Gastrocnemius medialis (tissue), 4 donors: ENCODE measurements at regions of chr12 and their contacts with region 1.

Region 1: DNA sequence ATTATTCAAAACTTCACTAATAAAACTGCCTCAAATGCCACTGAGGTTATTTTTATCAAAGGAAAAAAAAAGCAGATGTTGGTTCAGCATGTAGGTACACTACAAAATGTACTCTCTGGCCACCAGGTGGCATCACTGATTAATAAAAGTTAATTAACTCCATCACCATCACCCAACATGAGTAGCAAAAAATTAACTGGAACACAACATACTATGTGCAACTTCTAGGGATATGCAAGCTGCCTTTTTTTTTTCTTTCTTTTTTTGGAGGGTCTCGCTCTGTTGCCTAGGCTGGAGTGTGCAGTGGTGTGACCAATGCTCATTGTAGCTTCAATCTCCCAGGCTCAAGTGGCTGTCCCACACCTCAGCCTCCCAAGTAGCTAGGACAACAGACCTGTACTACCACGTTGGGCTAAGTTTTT is 43.8 kb upstream of the NR2C1 start:
- DNase-seq: peak; percentile 32 to 53
- ATAC-seq: peak; percentile 87 to 92
- H3K4me3 ChIP-seq: no peak overlapping the region
- H3K27ac ChIP-seq: peak overlapping the region in 2 of 4 donors; percentile 22 to 59
- H3K4me1 ChIP-seq: peaks cover 16 to 23% of the 10 kb centered on the region in 2 donors
- H3K27me3 ChIP-seq: no peaks in the 10 kb centered on the region
- CTCF ChIP-seq: peak; percentile 52 to 80 (median 72)
- POLR2A ChIP-seq: no peak

Region 2: DNA sequence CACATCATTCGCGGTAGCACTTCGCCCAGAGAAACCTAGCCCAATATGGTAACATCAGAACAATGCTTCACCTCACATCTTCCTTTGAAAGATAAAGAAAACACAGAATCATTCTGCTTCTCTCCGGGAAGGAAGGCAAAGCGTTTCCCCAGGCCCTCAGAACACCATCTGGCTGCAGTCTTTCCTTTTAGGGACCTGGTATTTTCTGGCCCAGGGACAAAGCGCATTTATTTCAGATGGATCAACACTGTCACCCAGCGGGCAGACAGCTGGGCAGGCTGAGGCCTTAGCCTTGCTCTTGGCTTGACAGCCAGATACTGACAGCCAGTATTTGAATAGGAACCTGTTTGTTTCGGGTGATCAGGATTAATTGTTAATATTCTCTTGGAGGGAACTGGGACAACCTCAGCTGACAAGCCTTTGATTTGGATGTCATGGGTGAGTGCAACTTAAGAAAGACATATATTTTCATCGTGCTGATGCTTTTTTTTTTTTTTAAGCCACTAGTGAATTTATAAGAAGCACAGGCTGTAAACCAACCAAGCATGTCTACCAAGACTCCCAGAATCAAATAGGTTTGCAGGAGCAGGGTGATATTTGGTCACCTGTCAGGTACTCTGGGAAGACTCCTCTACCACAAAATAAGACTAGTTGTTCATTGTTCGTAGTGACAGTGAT is 219.3 kb after region 1 on chr12:
- in situ Hi-C with region 1: loop called (anchors 5 kb)
- intact Hi-C with region 1: loop called (anchors 1 kb)
- DNase-seq: peak; percentile 55 to 75
- ATAC-seq: peak; percentile 95 to 97
- H3K4me3 ChIP-seq: peak overlapping the region in 1 of 4 donors; percentile 9
- H3K27ac ChIP-seq: peak overlapping the region; percentile 2 to 42 (median 38)
- H3K4me1 ChIP-seq: peaks cover 0 to 18% of the 10 kb centered on the region in 2 donors
- H3K27me3 ChIP-seq: no peaks in the 10 kb centered on the region
- CTCF ChIP-seq: peak; percentile 69 to 95 (median 92)
- POLR2A ChIP-seq: no peak